Upper lobe of right lung (tissue), 1 donor: ENCODE measurements at regions of chr2 and their contacts with region 1.

Region 1: GRCh38 chr2:231709981-231710798 is 1.9 kb downstream of the PTMA start:
- DNase-seq: peak; percentile 92
- ATAC-seq: peak; percentile 56
- H3K4me3 ChIP-seq: peak overlapping the region; percentile 99
- H3K27ac ChIP-seq: peak overlapping the region; percentile 99
- H3K4me1 ChIP-seq: peaks cover 33% of the 10 kb centered on the region
- H3K27me3 ChIP-seq: no peaks in the 10 kb centered on the region
- CTCF ChIP-seq: peak; percentile 65

Region 2: DNA sequence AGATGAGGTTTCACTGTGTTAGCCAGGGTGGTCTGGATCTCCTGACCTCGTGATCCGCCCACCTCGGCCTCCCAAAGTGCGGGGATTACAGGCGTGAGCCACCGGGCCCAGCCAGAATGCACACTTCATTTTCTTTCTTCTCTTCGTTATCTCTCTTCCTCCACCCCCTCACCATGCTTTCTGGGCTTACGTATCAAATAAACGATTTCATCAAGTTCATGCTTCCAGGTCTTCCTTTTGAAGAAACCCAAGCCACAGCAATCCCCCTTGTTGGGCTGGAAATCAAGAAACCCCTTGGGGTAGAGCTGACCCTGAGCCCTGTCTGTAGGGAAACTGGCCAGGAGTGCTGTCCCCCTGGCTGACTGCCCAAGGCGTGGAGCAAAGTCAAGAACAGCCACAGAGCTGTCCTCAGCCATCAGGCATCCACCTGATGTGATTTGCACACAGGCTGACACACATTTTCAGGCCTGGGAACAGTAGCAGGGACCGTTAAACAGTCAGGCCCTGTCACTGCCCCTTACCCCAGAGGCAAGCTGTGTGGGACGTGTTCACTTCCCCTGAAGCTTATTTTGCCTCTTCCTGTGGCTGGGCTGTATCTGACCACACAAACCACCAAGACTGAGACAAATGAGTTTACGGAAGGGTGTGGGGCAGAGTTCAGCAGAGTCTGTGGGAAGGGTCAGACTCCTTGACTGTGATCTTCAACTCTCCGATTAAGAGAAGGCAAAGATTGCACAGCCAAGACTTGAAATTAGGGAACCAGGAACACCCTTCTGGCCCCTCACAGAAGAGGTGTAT is 164.9 kb before region 1 on chr2:
- intact Hi-C with region 1: no loop called
- DNase-seq: peak; percentile 76
- ATAC-seq: peak; percentile 96
- H3K4me3 ChIP-seq: no peak overlapping the region
- H3K27ac ChIP-seq: peak overlapping the region; percentile 56
- H3K4me1 ChIP-seq: peaks cover 30% of the 10 kb centered on the region
- H3K27me3 ChIP-seq: no peaks in the 10 kb centered on the region
- CTCF ChIP-seq: no peak

Region 3: GRCh38 chr2:231612179-231613053 is 97.8 kb before region 1 on chr2:
- intact Hi-C with region 1: loop called (anchors 5 kb)
- DNase-seq: peak; percentile 96
- ATAC-seq: peak; percentile 86
- H3K4me3 ChIP-seq: no peak overlapping the region
- H3K27ac ChIP-seq: peak overlapping the region; percentile 96
- H3K4me1 ChIP-seq: peaks cover 33% of the 10 kb centered on the region
- H3K27me3 ChIP-seq: no peaks in the 10 kb centered on the region
- CTCF ChIP-seq: peak; percentile 99

Region 4: DNA sequence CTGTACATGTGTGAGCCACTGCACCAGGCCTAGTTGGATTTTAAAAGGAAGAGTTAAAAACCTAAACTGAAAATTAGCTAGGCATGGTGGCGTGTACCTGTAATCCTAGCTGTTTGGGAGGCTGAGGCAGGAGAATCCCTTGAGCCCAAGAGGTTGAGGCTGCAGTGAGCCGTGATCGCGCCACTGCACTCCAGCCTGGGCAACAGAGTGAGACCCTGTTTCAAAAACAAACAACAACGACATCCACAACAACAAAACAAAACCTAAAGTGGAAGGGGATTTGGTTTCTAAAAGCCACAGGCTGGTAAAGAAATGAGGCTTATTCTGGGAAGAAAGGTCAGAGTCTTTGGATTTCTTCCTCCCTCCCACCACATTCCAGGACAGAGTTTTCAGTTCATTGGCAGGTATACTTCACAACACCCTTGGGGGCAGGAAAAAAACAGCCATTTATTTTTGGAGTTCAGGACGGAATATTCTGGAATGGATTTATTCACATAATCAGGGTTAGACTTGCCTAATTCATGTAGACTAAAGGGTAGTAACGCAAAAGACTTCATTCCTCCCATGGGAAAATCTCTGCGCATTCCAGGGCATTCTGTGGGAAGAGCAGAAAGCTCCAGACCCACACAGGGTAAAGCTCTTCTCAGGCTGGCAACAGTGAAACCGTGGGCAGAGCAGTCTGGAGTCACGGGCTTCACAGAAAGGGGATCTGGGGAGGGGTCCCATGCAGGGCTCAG is 82.6 kb before region 1 on chr2:
- intact Hi-C with region 1: no loop called
- DNase-seq: no peak
- ATAC-seq: no peak
- H3K4me3 ChIP-seq: no peak overlapping the region
- H3K27ac ChIP-seq: peak overlapping the region; percentile 18
- H3K4me1 ChIP-seq: no peaks in the 10 kb centered on the region
- H3K27me3 ChIP-seq: no peaks in the 10 kb centered on the region
- CTCF ChIP-seq: no peak

Region 5: GRCh38 chr2:231674587-231675338 is 35.4 kb before region 1 on chr2:
- intact Hi-C with region 1: loop called (anchors 5 kb)
- DNase-seq: peak; percentile 89
- ATAC-seq: peak; percentile 63
- H3K4me3 ChIP-seq: no peak overlapping the region
- H3K27ac ChIP-seq: peak overlapping the region; percentile 89
- H3K4me1 ChIP-seq: peaks cover 47% of the 10 kb centered on the region
- H3K27me3 ChIP-seq: no peaks in the 10 kb centered on the region
- CTCF ChIP-seq: peak; percentile 84